ENCODE measurements at regions of chr15 and their contacts with region 1.

Region 1: GRCh38 chr15:65336493-65337455 is 32.3 kb downstream of the RNU5B-1 start:
- DNase-seq: no peak
- H3K4me3 ChIP-seq: no peak overlapping the region
- H3K27ac ChIP-seq: no peak overlapping the region
- H3K4me1 ChIP-seq: peaks cover 20 to 48% (median 37%) of the 10 kb centered on the region in 4 experiments
- H3K27me3 ChIP-seq: no peaks in the 10 kb centered on the region
- CTCF ChIP-seq: peak in 2 of 3 experiments; percentile 28 to 38; a peak in 2 of 4 replicates
- EP300 ChIP-seq: no peak
- POLR2A ChIP-seq: no peak
- RAD21 ChIP-seq: peak; percentile 30 to 50; a peak in 3 of 4 replicates

Region 2: DNA sequence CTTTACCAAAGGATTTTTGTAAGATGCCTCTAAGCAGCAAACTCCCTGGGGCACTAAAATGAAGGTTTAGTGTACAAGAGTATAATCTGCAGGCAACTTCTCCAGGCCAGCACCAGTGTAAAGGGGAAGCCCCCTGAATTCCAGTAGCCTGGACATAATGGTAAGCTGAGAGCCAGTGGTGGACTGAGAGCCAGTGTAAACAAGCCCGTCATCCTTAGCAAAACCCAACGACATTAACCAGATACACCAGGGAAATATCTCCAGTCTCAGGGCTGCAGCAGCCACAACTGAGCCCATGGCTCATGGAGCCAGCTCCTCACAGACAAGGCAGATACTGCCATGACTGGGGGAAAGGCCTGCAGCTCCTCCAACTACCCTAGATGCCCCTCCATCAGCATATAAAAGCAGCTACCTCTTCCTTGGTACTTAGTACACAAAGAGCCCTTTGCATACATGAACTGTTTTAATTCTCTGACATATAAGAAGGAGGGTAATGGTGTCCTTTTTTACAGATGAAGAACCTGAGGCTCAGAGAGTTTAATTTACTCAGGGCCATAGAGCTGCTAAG is 71.8 kb before region 1 on chr15:
- CTCF ChIA-PET with region 1: no interaction called
- POLR2A ChIA-PET with region 1: no interaction called
- DNase-seq: no peak
- H3K4me3 ChIP-seq: no peak overlapping the region
- H3K27ac ChIP-seq: no peak overlapping the region
- H3K4me1 ChIP-seq: peaks cover 3 to 10% (median 4%) of the 10 kb centered on the region in 4 experiments; a peak in 5 of 7 replicates
- H3K27me3 ChIP-seq: no peaks in the 10 kb centered on the region
- CTCF ChIP-seq: no peak
- EP300 ChIP-seq: no peak
- POLR2A ChIP-seq: no peak
- RAD21 ChIP-seq: no peak

Region 3: GRCh38 chr15:65326117-65326526 is 10.7 kb before region 1 on chr15:
- CTCF ChIA-PET with region 1: interaction called, 32 read pairs
- POLR2A ChIA-PET with region 1: interaction called, 20 read pairs
- DNase-seq: no peak
- H3K4me3 ChIP-seq: no peak overlapping the region
- H3K27ac ChIP-seq: no peak overlapping the region
- H3K4me1 ChIP-seq: peaks cover 0 to 7% (median 1%) of the 10 kb centered on the region in 4 experiments; a peak in 4 of 7 replicates
- H3K27me3 ChIP-seq: 0 out of 7 replicates have a peak, but pooled peaks cover 0 to 3% (median 0%) of the 10 kb centered on the region in 4 experiments
- CTCF ChIP-seq: no peak
- EP300 ChIP-seq: no peak
- POLR2A ChIP-seq: no peak
- RAD21 ChIP-seq: no peak

Region 4: DNA sequence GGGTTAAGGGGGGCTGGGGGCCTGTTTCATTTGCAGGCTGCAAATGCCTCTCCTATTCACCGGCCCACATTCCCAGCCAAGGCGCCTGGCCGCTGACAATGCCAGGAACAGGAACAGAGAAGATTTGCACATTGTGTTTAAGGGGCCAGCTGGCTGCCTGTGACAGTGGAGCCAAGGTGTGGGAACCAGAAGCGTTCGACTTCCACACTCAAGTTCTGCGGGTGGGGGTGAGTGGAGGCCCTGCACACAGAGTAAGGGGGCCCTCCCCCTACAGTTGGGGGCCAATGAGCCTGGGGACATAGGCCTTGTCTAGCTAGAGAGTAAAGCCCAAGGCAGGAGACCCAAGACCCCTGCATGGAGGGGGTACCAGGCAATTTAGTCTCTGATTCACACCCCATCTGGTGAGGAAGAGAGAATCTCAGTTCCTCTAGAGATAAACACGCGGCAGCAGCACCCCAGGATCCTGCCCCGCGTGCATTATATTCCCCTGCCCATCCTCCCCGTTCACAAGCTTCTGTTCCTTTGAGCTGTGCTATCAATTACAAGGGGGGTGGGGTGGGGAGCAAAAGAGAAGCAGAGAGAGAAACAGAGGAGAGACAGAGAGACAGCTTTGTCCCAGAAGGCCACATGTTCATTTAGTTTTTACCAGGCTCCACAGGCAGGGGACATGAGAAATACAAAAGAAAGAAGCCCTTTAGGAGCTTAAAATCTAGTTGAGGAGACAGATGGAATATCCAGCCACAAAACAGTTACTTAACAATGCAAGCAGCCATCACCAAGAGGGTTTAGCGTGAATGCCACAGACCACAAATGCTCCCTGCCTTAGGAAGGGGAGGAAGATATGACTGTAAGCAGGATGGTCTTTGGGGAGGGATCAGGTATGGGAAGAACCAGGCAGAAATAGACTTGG is 31.8 kb after region 1 on chr15:
- CTCF ChIA-PET with region 1: interaction called, 10 read pairs
- POLR2A ChIA-PET with region 1: interaction called, 8 read pairs
- DNase-seq: peak; percentile 60 to 63
- H3K4me3 ChIP-seq: peak overlapping the region in 2 of 4 experiments; percentile 19 to 27; a peak in 3 of 8 replicates
- H3K27ac ChIP-seq: peak overlapping the region; percentile 26
- H3K4me1 ChIP-seq: peaks cover 31 to 56% (median 42%) of the 10 kb centered on the region in 4 experiments
- H3K27me3 ChIP-seq: no peaks in the 10 kb centered on the region
- CTCF ChIP-seq: no peak
- EP300 ChIP-seq: no peak
- POLR2A ChIP-seq: no peak
- RAD21 ChIP-seq: no peak

Region 5: DNA sequence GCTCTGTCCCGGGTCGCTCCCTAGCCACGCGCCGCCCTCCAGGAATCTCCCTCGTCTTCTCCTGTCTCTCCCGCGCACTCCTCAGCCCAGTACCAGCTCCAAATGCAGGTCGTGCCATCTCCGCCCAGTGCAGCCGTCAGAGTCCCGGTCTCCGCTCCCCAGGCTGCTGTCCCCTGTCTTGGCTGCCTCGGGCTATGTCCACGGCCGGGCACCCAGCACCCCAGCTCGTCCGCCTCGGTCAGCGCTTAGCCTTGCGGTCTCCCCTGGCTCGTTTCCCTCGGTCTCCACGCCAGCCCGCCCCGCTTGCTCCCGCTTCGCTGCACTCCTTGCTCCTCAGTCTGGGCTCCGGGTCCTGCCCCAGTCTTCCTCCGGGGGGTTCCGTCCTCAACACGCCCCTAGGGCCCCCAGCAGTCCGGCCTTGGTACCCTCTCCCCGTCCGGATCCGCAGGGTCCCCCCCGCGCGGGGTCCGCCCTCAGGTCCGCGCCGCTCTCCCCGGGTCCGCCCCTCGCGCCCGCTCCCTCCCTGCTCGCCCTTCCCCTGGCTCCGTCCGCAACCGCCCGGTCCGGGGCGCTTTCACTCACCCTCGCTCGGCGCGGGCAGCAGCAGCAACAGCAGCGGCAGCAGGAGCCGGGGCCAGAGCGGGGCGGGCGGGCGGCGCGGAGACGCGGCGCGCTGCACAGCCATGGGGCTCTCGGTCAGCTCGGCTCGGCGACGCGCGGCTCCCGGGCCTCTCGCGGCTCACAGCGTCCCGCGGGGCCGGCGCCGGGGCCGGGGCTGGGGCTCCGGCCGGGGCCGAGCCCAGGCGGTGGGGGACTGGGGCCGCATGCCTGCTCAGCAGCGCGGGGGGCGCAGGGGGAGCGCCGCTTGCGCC is 40.6 kb after region 1 on chr15:
- CTCF ChIA-PET with region 1: interaction called, 15 read pairs
- POLR2A ChIA-PET with region 1: interaction called, 20 read pairs
- DNase-seq: peak in 1 of 2 experiments; percentile 83
- H3K4me3 ChIP-seq: peak overlapping the region; percentile 58 to 89 (median 80)
- H3K27ac ChIP-seq: no peak overlapping the region
- H3K4me1 ChIP-seq: peaks cover 8 to 25% (median 14%) of the 10 kb centered on the region in 4 experiments
- H3K27me3 ChIP-seq: peaks cover 0 to 20% (median 10%) of the 10 kb centered on the region in 4 experiments; a peak in 5 of 7 replicates
- CTCF ChIP-seq: no peak
- EP300 ChIP-seq: no peak
- POLR2A ChIP-seq: no peak; a peak in 1 of 3 replicates
- RAD21 ChIP-seq: no peak

Region 6: DNA sequence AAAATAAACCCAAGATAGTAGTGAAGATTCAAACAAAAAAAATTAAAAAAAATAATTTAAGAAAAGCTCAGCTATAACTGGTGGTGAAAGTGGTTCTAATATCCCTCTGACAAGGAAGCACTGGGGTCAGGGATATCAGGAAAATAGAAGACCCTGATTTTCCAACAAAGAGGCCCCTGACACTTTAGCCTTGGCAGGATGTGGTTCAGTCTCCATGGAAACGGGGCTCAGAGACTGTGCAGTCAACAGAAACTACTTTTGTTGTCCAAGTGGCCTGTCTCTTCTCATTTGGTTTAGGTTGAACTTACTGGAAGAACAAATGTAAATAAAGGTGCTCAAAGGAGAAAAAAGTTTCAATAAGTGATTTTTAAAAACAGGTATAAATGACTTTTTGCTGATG is 246.9 kb after region 1 on chr15:
- CTCF ChIA-PET with region 1: no interaction called
- POLR2A ChIA-PET with region 1: no interaction called
- DNase-seq: no peak
- H3K4me3 ChIP-seq: no peak overlapping the region
- H3K27ac ChIP-seq: no peak overlapping the region
- H3K4me1 ChIP-seq: no peaks in the 10 kb centered on the region
- H3K27me3 ChIP-seq: no peaks in the 10 kb centered on the region
- CTCF ChIP-seq: no peak
- EP300 ChIP-seq: no peak
- POLR2A ChIP-seq: no peak
- RAD21 ChIP-seq: no peak